GM12878 (cell line): ENCODE measurements at regions of chr17 and their contacts with region 1.

Region 1: DNA sequence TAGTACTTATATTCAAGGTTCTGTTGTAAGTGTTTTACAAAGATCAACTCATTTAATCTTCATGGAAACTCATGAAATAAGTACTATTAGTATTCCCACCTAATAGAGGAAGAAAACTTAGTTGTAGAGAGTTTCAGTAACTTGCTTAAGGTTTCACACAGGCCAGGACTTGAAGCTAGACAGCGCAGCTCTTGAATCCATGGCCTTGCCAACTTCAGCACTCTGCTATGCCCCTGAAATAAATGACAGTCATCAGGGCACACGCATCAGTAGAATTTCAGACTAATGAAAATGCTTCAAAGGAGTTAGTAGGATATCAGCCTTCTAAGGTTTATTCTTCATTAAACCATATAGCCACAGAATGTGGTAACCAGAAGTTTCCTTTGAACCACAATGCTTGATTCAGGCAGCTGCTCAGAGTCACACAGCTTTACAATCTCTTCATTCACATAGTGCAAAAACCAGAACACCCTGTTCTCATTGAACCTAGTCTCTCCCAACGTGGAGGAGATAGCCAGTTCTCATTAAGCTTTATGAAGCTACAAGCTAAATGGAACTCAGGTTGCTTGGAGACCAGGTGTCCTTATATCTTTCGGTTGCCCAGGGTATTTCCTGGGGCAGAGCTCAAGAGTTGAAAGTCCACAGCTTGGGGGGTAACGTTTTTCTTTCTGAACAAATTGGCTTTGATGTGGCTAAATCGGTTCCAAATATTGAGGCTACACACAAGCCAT is 39.7 kb downstream of the KCNJ2 start:
- DNase-seq: peak; percentile 28
- ATAC-seq: peak; percentile 86
- H3K4me3 ChIP-seq: no peak overlapping the region
- H3K27ac ChIP-seq: no peak overlapping the region
- H3K4me1 ChIP-seq: no peaks in the 10 kb centered on the region; the same call in 1 of the 2 replicates
- H3K27me3 ChIP-seq: no peaks in the 10 kb centered on the region
- CTCF ChIP-seq: no peak
- EP300 ChIP-seq: peak; percentile 68 to 72; a peak in 2 of 4 replicates
- POLR2A ChIP-seq: no peak
- RAD21 ChIP-seq: no peak

Region 2: GRCh38 chr17:70168977-70169708 is 39.8 kb before region 1 on chr17 and contains the start of gene KCNJ2:
- CTCF ChIA-PET with region 1: interaction called, 31 read pairs
- POLR2A ChIA-PET with region 1: interaction called, 5 read pairs
- RAD21 ChIA-PET with region 1: interaction called, 57 read pairs
- SMC1A ChIA-PET with region 1: interaction called, 24 read pairs
- in situ Hi-C with region 1: no loop called
- intact Hi-C with region 1: loop called (anchors 2 kb)
- DNase-seq: no peak
- ATAC-seq: peak; percentile 95
- H3K4me3 ChIP-seq: peak within 1 kb of the TSS; percentile 38
- H3K27ac ChIP-seq: no peak within 1 kb of the TSS
- H3K4me1 ChIP-seq: peaks cover 8% of the 10 kb centered on the region
- H3K27me3 ChIP-seq: peaks cover 0 to 10% of the 10 kb centered on the region in 2 experiments; a peak in 1 of 4 replicates
- CTCF ChIP-seq: no peak
- EP300 ChIP-seq: no peak
- POLR2A ChIP-seq: no peak
- RAD21 ChIP-seq: no peak
- polyA plus RNA-seq, gene KCNJ2: 1.6 to 3.0 TPM

Region 3: DNA sequence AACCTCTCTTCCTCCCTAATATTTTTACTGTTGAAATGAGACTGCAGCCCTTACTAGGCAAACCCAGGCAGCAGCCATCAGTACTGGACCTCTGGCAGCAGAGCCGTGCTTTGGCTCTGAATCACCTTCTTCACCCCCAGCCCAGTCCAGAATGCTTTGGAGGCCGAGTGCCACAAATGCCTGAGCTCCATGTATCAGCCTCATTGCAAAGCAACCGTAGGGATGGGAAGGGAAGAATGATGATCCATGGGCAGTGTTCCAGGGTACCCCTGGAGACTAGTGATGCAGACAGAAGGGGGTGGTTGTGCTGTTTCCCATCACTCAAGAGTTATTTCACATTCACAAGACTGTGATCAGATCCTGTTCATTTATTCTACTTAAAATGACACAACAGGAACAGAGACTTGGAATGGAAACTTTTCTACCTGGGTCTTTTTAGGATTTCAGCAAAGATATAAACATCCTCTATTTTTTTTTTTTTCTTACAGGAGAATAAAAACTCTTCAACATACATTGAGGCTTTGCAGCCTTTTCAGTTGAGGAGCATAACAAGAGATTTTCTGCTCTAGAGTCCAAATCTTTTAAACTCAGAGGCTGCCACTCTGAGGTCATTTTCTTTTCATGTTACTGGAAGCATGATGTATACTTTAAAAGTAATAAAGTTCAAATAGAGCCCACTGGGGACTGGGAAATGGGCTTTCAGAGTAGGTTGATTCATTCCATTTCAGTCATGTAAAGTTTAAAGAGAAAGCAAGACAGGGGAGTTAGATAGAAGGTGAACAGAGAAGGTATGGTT is 98.6 kb after region 1 on chr17:
- CTCF ChIA-PET with region 1: no interaction called
- POLR2A ChIA-PET with region 1: interaction called, 5 read pairs
- RAD21 ChIA-PET with region 1: interaction called, 8 read pairs
- SMC1A ChIA-PET with region 1: interaction called, 10 read pairs
- in situ Hi-C with region 1: no loop called
- intact Hi-C with region 1: no loop called
- DNase-seq: no peak
- ATAC-seq: peak; percentile 40; the same call in 1 of the 3 replicates
- H3K4me3 ChIP-seq: no peak overlapping the region
- H3K27ac ChIP-seq: no peak overlapping the region
- H3K4me1 ChIP-seq: no peaks in the 10 kb centered on the region
- H3K27me3 ChIP-seq: no peaks in the 10 kb centered on the region
- CTCF ChIP-seq: no peak
- EP300 ChIP-seq: no peak
- POLR2A ChIP-seq: no peak
- RAD21 ChIP-seq: no peak

Region 4: DNA sequence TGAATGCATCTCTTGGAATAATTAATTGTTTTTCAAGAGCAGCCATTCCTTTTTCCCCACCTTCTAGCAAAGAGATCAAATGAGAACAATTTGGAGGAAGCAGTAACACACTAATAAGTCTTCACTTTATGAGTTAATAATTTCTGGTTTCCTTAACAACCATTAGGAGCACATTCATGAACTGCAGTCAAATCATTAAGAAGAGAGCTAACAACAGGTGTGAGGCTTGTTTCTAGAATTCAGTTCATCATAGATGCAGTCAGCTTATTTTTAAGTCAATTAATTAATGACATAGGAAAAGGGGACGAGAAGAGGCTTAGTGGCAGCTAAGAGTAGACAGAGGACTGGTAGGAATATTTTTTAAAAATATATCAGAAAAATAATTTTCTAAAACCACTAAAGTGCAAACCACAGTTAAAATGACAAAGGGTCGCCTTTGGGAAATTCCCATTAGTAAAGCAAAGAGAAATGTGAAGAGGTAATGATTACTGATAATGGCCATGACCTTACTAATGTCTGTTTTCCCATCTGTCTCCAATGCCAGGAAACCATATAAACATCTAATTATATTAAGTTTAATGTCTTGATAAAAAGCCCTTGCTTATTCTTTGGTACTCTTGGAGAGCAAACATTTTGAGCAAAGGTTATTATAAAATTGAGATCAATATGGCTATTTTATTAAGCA is 144.6 kb after region 1 on chr17:
- CTCF ChIA-PET with region 1: no interaction called
- POLR2A ChIA-PET with region 1: no interaction called
- RAD21 ChIA-PET with region 1: interaction called, 20 read pairs
- SMC1A ChIA-PET with region 1: interaction called, 28 read pairs
- in situ Hi-C with region 1: no loop called
- intact Hi-C with region 1: no loop called
- DNase-seq: no peak
- ATAC-seq: peak; percentile 83
- H3K4me3 ChIP-seq: no peak overlapping the region
- H3K27ac ChIP-seq: no peak overlapping the region
- H3K4me1 ChIP-seq: no peaks in the 10 kb centered on the region
- H3K27me3 ChIP-seq: no peaks in the 10 kb centered on the region
- CTCF ChIP-seq: no peak
- EP300 ChIP-seq: no peak
- POLR2A ChIP-seq: no peak
- RAD21 ChIP-seq: no peak

Region 5: DNA sequence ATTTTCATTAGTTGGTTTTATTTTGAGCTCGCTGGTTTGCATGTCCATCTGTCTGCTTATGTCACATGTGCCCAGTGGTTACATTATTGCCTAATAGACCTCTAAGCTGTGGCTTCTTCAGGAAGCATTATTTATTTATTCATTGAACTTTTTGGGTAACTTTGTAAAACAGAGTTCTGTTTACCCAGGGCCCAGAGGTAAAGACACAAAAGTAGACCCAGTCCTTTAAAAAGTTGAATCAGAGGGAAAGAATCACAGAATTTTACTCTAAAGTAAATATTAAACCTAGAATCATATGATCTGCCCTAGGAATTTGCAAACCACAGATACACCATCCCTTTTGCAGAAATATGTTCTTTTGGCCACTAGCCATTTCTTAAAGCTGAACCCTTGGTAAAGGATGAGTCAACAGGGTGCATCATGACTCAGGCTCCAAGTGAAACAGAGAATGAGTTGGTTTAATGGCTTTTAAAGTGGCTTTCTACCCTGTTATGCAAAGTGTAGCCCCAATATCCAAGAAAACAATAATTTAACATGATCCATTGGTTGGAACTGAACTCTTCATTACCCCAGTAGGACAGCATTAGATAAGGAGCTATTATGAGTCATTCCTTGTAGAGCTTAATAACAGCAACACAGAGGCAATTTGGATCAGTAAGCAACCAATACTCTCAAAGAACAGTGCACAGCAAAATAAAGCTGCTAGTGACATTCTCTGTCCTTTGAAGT is 196.7 kb after region 1 on chr17:
- CTCF ChIA-PET with region 1: no interaction called
- POLR2A ChIA-PET with region 1: interaction called, 3 read pairs
- RAD21 ChIA-PET with region 1: interaction called, 3 read pairs
- SMC1A ChIA-PET with region 1: interaction called, 8 read pairs
- in situ Hi-C with region 1: no loop called
- intact Hi-C with region 1: loop called (anchors 5 kb)
- DNase-seq: peak; percentile 41
- ATAC-seq: peak; percentile 96
- H3K4me3 ChIP-seq: no peak overlapping the region
- H3K27ac ChIP-seq: no peak overlapping the region
- H3K4me1 ChIP-seq: no peaks in the 10 kb centered on the region
- H3K27me3 ChIP-seq: no peaks in the 10 kb centered on the region
- CTCF ChIP-seq: no peak
- EP300 ChIP-seq: peak in 1 of 2 experiments; percentile 36; a peak in 1 of 4 replicates
- POLR2A ChIP-seq: no peak
- RAD21 ChIP-seq: no peak